Panc1 (cell line): ENCODE measurements at regions of chr17 and their contacts with region 1.

Region 1: GRCh38 chr17:11039342-11039741 is 201.5 kb upstream of the PIRT start:
- DNase-seq: no peak
- ATAC-seq: no peak
- H3K4me3 ChIP-seq: no peak overlapping the region
- H3K27ac ChIP-seq: no peak overlapping the region
- H3K4me1 ChIP-seq: no peaks in the 10 kb centered on the region
- H3K27me3 ChIP-seq: no peaks in the 10 kb centered on the region
- CTCF ChIP-seq: no peak

Region 2: DNA sequence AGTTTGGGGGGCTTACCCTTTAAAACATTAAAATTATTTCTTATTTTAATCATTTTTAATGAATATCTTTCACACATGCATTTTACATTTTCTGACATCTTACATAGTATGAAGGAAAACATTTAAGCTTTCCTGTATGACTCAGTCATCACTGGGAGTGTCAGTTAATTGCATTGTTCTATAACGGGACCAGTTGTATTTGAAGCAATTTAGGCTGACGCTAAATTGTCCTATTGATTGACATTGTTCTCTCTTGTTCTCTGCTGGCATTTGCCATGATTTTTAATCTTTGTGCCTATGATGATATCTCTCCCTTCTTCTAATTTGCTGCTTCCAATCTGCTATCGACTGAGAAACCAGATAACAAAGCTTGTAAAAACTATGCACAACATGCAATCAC is 11.0 kb before region 1 on chr17:
- CTCF ChIA-PET with region 1: no interaction called
- POLR2A ChIA-PET with region 1: no interaction called
- in situ Hi-C with region 1: no loop called
- intact Hi-C with region 1: loop called (anchors 1 kb)
- DNase-seq: no peak
- ATAC-seq: no peak
- H3K4me3 ChIP-seq: no peak overlapping the region
- H3K27ac ChIP-seq: no peak overlapping the region
- H3K4me1 ChIP-seq: no peaks in the 10 kb centered on the region
- H3K27me3 ChIP-seq: no peaks in the 10 kb centered on the region
- CTCF ChIP-seq: no peak